Endothelial cell of umbilical vein (primary cell): ENCODE measurements at regions of chr11 and their contacts with region 1.

Region 1: GRCh38 chr11:61947486-61948210 is 2.5 kb upstream of the BEST1 start:
- DNase-seq: peak; percentile 84
- H3K4me3 ChIP-seq: no peak overlapping the region
- H3K27ac ChIP-seq: no peak overlapping the region
- H3K4me1 ChIP-seq: no peaks in the 10 kb centered on the region
- H3K27me3 ChIP-seq: peaks cover 2% of the 10 kb centered on the region in 2 experiments
- CTCF ChIP-seq: peak; percentile 92 to 94
- POLR2A ChIP-seq: no peak

Region 2: DNA sequence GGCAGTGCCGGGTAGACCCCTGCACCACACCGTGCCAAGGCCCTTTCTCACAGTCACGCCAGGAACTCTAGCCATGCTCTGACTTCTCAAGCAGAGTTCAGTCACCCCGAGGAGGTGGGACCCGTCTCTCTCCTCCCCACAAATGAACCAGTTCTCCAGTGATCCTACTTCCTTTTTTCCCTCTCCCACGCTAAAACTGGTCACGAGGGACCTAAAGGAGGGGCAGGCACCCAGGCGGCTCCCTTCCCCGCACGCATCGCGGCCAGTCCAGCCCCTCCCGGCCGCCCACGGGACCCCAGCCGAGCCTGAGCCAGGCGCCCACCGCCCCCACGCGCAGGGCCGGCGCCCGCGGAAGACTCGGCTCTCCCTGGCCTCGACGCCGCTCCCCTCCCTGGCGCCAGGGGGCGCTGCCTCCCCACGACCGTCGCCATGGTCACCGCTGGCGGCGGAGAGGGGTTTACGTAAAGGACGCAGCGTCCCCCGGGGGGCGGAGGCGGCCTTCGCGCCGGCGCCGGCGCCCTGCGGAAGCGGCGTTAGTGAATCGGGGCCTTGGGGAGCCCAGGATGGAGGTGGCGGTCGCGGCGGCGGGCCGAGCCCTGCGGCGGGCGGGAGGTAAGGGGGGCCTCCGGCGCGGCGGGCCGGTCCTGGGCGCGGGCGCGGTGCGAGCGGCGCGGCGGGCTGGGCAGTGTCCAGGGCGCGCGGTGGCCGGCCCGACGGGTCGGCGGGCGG is 267.6 kb before region 1 on chr11 and contains the start of gene DAGLA:
- CTCF ChIA-PET with region 1: no interaction called
- POLR2A ChIA-PET with region 1: no interaction called
- dilution Hi-C with region 1: no loop called
- intact Hi-C with region 1: no loop called
- DNase-seq: peak; percentile 54
- H3K4me3 ChIP-seq: peak within 1 kb of the TSS in 2 of 3 experiments; percentile 9 to 42
- H3K27ac ChIP-seq: no peak within 1 kb of the TSS
- H3K4me1 ChIP-seq: peaks cover 16% of the 10 kb centered on the region
- H3K27me3 ChIP-seq: peaks cover 12 to 24% of the 10 kb centered on the region in 2 experiments
- CTCF ChIP-seq: peak; percentile 91 to 97
- POLR2A ChIP-seq: peak; percentile 37
- total RNA-seq, gene DAGLA: 3.5 and 4.7 TPM in 2 replicates

Region 3: DNA sequence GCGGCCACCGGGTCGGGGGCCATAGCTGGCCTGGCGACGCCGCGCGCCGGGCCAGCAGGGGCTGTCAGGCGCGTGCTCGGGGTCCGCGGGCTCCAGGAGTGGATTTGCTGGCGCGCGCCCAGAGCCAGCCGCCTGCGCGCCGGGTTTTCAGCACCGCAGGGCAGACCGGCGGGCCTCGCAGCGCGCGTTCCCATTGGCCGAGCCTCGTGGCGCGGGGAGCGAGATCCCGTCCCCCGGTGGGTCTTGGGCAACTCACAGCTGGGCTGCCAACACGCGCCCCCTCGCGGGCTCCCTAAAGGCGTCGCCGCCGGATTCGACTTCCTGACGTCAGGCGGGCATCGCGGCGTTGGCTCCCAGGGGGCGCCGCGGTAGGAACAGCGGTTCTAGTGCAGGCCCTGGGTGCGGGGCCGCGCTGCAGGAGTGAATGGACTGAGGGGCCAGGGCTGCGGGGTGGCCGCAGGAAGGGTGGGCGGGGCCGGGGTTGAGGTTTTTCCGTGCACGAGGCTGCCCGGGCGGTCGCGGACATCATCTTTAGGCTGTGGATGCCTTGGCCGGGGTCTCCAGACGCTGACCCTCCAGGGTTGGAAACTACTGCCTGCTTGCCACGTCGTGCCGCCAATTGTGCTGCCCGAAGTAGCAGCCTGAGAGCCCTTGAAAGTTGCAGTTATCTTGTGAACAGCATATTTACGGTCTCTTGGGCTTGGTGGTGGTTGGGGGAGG is 130.8 kb before region 1 on chr11 and contains the start of gene FADS1:
- CTCF ChIA-PET with region 1: interaction called, 16 read pairs
- POLR2A ChIA-PET with region 1: no interaction called
- dilution Hi-C with region 1: no loop called
- intact Hi-C with region 1: no loop called
- DNase-seq: peak; percentile 97
- H3K4me3 ChIP-seq: peak within 1 kb of the TSS; percentile 56 to 86 (median 62)
- H3K27ac ChIP-seq: peak within 1 kb of the TSS; percentile 86
- H3K4me1 ChIP-seq: peaks cover 19% of the 10 kb centered on the region
- H3K27me3 ChIP-seq: no peaks in the 10 kb centered on the region
- CTCF ChIP-seq: peak; percentile 79 to 89
- POLR2A ChIP-seq: peak; percentile 50
- total RNA-seq, gene FADS1: 109 and 110 TPM in 2 replicates

Region 4: GRCh38 chr11:61871158-61871597 is 76.5 kb before region 1 on chr11:
- CTCF ChIA-PET with region 1: interaction called, 100 read pairs
- POLR2A ChIA-PET with region 1: no interaction called
- dilution Hi-C with region 1: no loop called
- intact Hi-C with region 1: loop called (anchors 1 kb)
- DNase-seq: peak; percentile 76
- H3K4me3 ChIP-seq: no peak overlapping the region
- H3K27ac ChIP-seq: no peak overlapping the region
- H3K4me1 ChIP-seq: peaks cover 12% of the 10 kb centered on the region
- H3K27me3 ChIP-seq: no peaks in the 10 kb centered on the region
- CTCF ChIP-seq: peak; percentile 95 to 99
- POLR2A ChIP-seq: no peak

Region 5: DNA sequence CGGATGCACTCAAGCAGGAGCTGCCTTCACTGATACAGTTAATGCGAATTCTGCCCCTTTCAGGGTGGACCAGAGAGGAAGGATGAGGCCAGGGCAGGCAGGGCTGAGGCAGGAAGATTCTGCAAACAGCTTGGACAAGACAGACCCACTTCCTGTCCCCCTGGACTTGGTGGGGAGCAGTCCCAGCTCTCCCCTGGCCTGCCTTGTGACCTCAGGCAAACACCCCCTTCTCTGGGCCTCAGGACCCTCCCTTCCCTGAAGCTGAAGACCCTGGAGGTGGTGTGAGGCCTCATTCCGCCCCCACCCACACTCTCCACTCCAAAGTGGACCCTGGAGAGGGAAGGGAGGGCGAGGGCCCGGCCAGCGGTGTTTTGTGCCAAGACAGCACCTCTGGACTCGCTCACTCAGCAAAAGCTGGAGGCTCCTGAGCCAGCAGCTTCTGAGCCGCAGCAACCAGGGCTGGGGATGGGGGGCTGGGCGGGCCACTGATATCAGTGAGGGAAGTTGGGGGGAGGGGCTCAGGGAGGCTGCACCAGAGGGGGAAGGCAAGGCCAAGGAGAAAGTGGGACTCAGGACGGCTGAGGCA is 38.8 kb before region 1 on chr11:
- CTCF ChIA-PET with region 1: interaction called, 276 read pairs
- POLR2A ChIA-PET with region 1: no interaction called
- dilution Hi-C with region 1: no loop called
- intact Hi-C with region 1: no loop called
- DNase-seq: no peak
- H3K4me3 ChIP-seq: no peak overlapping the region
- H3K27ac ChIP-seq: no peak overlapping the region
- H3K4me1 ChIP-seq: no peaks in the 10 kb centered on the region
- H3K27me3 ChIP-seq: no peaks in the 10 kb centered on the region
- CTCF ChIP-seq: no peak
- POLR2A ChIP-seq: no peak

Region 6: GRCh38 chr11:61928606-61929005 is 19.0 kb before region 1 on chr11:
- CTCF ChIA-PET with region 1: interaction called, 18 read pairs
- POLR2A ChIA-PET with region 1: no interaction called
- dilution Hi-C with region 1: no loop called
- intact Hi-C with region 1: no loop called
- DNase-seq: no peak
- H3K4me3 ChIP-seq: no peak overlapping the region
- H3K27ac ChIP-seq: no peak overlapping the region
- H3K4me1 ChIP-seq: no peaks in the 10 kb centered on the region
- H3K27me3 ChIP-seq: peaks cover 13 to 14% of the 10 kb centered on the region in 2 experiments
- CTCF ChIP-seq: no peak
- POLR2A ChIP-seq: no peak

Region 7: GRCh38 chr11:61967116-61967923 is 19.7 kb after region 1 on chr11 and contains the start of gene FTH1:
- CTCF ChIA-PET with region 1: interaction called, 13 read pairs
- POLR2A ChIA-PET with region 1: interaction called, 7 read pairs
- dilution Hi-C with region 1: no loop called
- intact Hi-C with region 1: no loop called
- DNase-seq: peak; percentile 89
- H3K4me3 ChIP-seq: peak within 1 kb of the TSS; percentile 98 to 99 (median 99)
- H3K27ac ChIP-seq: peak within 1 kb of the TSS; percentile 60
- H3K4me1 ChIP-seq: peaks cover 63% of the 10 kb centered on the region
- H3K27me3 ChIP-seq: no peaks in the 10 kb centered on the region
- CTCF ChIP-seq: no peak
- POLR2A ChIP-seq: peak; percentile 97
- total RNA-seq, gene FTH1: 2,371 and 2,501 TPM in 2 replicates

Region 8: DNA sequence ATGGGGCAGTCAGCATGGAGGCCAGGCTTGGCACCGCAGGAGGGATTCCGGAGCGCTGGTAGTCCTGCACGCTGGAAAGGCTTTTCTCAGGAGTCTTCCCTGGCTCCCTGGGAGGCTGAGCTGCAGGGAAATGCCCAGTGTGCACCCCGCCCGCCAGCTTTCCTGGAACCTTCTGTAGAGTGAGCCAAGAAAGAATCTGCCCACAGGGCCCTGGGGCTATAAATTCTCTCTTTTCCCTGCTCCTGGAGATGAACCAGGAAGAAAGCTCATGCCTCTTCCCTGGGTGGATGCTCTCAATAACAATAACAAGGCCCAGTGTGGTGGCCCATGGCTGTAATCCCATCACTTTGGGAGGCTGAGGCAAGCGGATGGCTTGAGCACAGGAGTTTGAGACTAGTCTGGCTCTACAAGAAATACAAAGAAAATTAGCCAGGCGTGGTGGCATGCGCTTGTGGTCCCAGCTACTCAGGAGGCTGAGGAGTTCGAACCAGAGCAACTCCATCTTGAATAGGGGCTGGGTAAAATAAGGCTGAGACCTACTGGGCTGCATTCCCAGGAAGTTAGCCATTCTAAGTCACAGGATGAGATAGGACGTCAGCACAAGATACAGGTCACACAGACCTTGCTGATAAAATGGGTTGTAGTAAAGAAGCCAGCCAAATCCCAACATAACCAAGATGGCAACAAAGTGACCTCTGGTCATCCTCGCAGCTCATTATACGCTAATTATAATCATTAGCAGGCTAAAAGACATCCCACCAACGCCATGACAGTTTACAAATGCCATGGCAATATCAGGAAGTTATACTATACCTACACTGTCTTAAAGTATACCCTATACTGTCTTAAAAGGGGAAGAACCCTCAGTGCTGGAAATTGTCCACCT is 66.2 kb after region 1 on chr11:
- CTCF ChIA-PET with region 1: no interaction called
- POLR2A ChIA-PET with region 1: no interaction called
- dilution Hi-C with region 1: no loop called
- intact Hi-C with region 1: no loop called
- DNase-seq: no peak
- H3K4me3 ChIP-seq: no peak overlapping the region
- H3K27ac ChIP-seq: no peak overlapping the region
- H3K4me1 ChIP-seq: no peaks in the 10 kb centered on the region
- H3K27me3 ChIP-seq: no peaks in the 10 kb centered on the region
- CTCF ChIP-seq: no peak
- POLR2A ChIP-seq: no peak

Region 9: DNA sequence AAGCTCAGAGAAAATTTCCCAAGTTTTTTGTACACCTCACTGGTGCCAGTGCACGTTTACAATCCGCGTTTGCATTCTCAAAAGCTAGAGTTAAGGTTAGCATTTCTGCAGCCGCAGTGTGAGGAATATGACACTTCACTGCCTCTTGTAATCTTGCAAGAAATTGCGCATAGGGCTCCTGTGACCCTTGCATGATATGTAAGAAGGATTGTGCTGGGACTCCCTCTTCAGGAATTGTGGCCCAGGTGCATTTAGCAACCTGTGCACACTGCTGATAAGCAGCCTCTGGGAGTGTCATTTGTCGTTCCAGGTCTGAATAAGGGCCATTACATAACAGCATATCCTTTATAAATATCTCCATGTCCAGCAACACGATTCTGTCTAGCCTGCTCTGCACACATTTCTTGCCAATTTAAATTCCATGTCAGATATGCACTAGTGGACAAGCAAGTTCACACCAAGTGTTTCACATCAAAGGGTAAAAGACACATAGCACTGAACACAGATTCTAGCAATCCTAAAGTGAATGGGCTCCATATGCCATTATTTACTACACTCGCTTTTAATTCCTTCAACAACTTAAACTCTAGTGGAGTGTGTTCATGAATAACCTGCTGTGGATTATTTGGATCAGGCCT is 107.0 kb after region 1 on chr11:
- CTCF ChIA-PET with region 1: interaction called, 8 read pairs
- POLR2A ChIA-PET with region 1: no interaction called
- dilution Hi-C with region 1: no loop called
- intact Hi-C with region 1: loop called (anchors 2 kb)
- DNase-seq: peak; percentile 38
- H3K4me3 ChIP-seq: no peak overlapping the region
- H3K27ac ChIP-seq: no peak overlapping the region
- H3K4me1 ChIP-seq: no peaks in the 10 kb centered on the region
- H3K27me3 ChIP-seq: peaks cover 14 to 17% of the 10 kb centered on the region in 2 experiments
- CTCF ChIP-seq: peak in 1 of 2 donors; percentile 14
- POLR2A ChIP-seq: no peak

Region 10: GRCh38 chr11:62383822-62384221 is 436.2 kb after region 1 on chr11:
- CTCF ChIA-PET with region 1: no interaction called
- POLR2A ChIA-PET with region 1: no interaction called
- dilution Hi-C with region 1: no loop called
- intact Hi-C with region 1: no loop called
- DNase-seq: no peak
- H3K4me3 ChIP-seq: no peak overlapping the region
- H3K27ac ChIP-seq: no peak overlapping the region
- H3K4me1 ChIP-seq: no peaks in the 10 kb centered on the region
- H3K27me3 ChIP-seq: no peaks in the 10 kb centered on the region
- CTCF ChIP-seq: no peak
- POLR2A ChIP-seq: no peak